Activated CD4-positive, alpha-beta memory T cell treated with anti-CD3 and anti-CD28 coated beads, Interleukin-2, amount 10 ng/mL, durations not matched to agents 7 days and 5 days (primary cell): ENCODE measurements at regions of chr9 and their contacts with region 1.

Region 1: DNA sequence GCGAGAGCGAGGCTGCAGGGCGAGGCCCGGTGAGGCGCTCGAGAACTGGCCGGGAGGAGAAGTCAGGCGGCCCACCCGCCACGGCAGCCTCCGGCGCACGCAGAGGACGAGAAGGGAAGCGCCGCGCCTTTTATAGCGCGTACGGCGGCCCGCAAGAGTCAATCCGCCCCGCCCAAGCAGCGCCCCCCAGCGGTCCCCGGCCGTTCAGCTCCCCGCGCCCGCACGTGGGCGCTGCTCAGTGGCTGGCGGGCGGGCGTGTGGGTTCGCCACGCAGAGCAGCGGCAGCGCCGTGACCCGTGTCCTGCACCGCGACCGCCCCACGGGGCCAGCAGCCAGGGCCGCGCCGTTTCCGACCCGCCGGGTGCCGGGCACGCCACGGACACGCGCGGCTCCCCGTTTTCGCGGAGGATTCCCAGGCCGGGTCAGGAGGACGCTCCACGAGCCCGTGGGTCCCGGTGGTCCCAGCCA is 14.6 kb downstream of the LCN10 start:
- DNase-seq: peak; percentile 92
- H3K4me3 Mint-ChIP-seq: peak overlapping the region; percentile 93
- H3K27ac Mint-ChIP-seq: no peak overlapping the region
- H3K4me1 Mint-ChIP-seq: peaks cover 40% of the 10 kb centered on the region
- H3K27me3 Mint-ChIP-seq: no peaks in the 10 kb centered on the region

Region 2: GRCh38 chr9:136267261-136268111 is 460.6 kb before region 1 on chr9:
- CTCF ChIA-PET with region 1: no interaction called
- POLR2A ChIA-PET with region 1: no interaction called
- DNase-seq: peak; percentile 90
- H3K4me3 Mint-ChIP-seq: peak overlapping the region; percentile 78
- H3K27ac Mint-ChIP-seq: peak overlapping the region; percentile 71
- H3K4me1 Mint-ChIP-seq: peaks cover 9% of the 10 kb centered on the region
- H3K27me3 Mint-ChIP-seq: peaks cover 11% of the 10 kb centered on the region

Region 3: DNA sequence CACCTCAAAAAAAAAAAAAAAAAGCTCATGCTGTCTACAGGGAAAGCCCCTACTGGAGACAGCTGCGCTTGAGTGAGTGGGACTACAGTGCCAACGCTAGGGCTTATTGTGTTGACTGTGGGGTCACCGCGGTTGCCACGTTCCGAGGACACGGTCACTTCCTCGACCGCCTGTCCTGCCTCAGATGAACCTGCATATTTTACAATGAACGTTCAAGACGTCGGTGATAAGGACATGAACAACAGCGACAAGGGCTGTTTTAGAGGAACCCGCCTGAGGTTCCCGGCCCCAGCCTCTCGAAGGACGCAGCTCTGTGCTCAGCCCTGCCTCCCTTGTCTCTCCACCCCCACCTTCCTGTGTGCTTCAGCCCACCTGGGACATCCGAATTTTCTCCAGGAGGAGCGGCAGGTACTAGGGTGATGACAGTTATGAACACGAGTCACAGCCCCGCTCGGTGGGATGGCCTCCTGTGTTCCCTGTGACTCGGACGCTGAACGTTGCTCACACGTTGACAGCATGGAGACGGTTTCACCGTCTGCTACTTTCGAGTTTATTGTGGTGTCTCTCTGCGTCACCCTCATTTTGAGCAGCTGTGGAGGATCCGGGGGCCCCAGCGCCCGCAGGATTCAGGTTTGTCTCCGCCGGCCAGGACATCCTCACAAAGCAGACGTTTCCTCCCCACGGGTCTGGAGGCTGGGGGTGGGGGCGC is 27.0 kb before region 1 on chr9:
- CTCF ChIA-PET with region 1: interaction called, 4 read pairs
- POLR2A ChIA-PET with region 1: interaction called, 16 read pairs
- DNase-seq: peak; percentile 69
- H3K4me3 Mint-ChIP-seq: peak overlapping the region; percentile 72
- H3K27ac Mint-ChIP-seq: peak overlapping the region; percentile 70
- H3K4me1 Mint-ChIP-seq: peaks cover 21% of the 10 kb centered on the region
- H3K27me3 Mint-ChIP-seq: peaks cover 30% of the 10 kb centered on the region

Region 4: GRCh38 chr9:136713548-136714457 is 14.3 kb before region 1 on chr9:
- CTCF ChIA-PET with region 1: interaction called, 6 read pairs
- POLR2A ChIA-PET with region 1: interaction called, 23 read pairs
- DNase-seq: no peak
- H3K4me3 Mint-ChIP-seq: no peak overlapping the region
- H3K27ac Mint-ChIP-seq: no peak overlapping the region
- H3K4me1 Mint-ChIP-seq: peaks cover 2% of the 10 kb centered on the region
- H3K27me3 Mint-ChIP-seq: peaks cover 28% of the 10 kb centered on the region

Region 5: DNA sequence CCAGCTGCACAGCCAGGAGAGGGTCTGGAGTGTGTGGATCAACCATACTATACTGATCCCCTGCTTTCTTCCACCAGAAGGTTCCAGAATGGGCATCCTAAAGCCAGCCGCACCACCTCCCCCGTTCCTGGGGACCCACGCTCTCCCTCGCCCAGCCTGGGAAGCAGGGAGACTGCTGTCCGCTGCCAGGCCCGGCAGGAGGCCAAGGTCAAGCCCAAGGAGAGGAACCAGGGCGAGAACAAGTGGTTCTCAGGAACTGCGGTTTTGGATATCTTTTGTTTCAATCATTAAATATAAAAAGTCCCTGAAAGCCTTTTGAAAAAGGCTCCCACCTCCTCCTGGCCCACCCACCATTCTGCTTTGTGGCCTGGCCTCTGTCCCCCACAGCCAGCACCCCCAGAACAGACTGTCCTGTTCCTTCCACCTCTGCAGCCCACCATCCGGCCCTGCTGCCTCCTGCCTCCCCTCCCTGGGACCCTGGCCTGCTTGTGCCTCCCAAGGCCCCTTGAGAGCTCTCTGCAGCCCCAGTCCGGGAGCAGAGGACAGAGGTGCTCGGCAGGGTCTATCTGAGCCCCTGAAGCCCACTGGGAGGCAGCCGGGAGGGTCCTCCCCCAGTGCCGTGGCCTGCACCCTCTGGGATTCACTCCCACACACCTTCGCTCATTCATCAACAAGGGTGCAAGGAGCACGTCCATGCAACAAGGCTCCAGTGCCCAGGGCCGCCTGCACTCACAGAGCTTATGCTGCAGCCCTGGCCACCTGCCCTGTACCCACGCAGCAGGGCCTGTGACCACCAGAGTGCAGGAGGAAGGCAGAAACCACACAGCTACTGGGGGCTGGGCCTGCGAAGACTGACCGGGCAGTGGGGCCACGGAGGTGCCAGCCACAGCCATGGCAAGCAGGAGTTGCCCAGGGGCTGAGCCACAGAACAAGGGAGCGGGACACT is 20.8 kb after region 1 on chr9:
- CTCF ChIA-PET with region 1: interaction called, 6 read pairs
- POLR2A ChIA-PET with region 1: interaction called, 12 read pairs
- DNase-seq: no peak
- H3K4me3 Mint-ChIP-seq: no peak overlapping the region
- H3K27ac Mint-ChIP-seq: no peak overlapping the region
- H3K4me1 Mint-ChIP-seq: peaks cover 12% of the 10 kb centered on the region
- H3K27me3 Mint-ChIP-seq: peaks cover 15% of the 10 kb centered on the region

Region 6: DNA sequence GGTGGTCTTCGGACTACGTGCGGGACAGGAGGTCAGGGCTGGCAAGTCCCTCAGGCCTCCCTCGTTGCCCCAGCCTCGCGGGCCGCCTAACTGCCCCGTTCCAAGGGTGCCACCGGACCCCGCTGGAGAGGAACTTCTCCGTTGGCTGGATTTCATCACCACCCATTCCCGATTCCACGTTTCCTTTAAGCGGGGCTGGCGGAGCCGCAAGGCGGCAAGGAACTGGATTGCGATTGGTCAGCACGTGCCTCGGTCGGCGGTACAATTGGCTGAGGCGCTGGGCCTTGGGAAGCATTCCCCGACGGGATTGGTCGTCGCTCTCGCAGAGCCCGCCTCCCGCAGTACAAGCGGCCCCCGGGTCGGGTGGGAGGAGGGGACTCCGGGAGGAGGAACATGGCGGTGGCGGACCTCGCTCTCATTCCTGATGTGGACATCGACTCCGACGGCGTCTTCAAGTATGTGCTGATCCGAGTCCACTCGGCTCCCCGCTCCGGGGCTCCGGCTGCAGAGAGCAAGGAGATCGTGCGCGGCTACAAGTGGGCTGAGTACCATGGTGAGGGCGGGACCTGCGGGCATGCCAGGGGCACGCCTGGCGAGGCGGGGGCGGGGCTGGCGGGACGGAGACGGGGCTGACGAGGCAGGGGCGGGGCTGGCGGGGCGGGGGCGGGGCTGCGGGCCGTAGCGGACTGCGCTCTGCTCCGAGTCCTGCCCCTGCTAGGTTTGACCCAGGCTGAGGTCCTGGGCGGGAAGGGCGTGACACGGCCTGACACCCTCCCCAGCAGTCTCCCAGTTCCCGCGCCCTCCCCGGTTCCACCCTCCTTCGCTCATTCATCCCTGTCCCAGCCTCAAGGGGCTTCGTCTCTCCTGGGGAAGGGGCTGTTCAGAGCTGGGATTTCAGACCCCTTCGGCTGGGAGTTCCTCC is 121.2 kb after region 1 on chr9 and contains the start of gene PHPT1:
- CTCF ChIA-PET with region 1: no interaction called
- POLR2A ChIA-PET with region 1: no interaction called
- DNase-seq: peak; percentile 97
- H3K4me3 Mint-ChIP-seq: peak within 1 kb of the TSS; percentile 93
- H3K27ac Mint-ChIP-seq: peak within 1 kb of the TSS; percentile 85
- H3K4me1 Mint-ChIP-seq: peaks cover 21% of the 10 kb centered on the region
- H3K27me3 Mint-ChIP-seq: peaks cover 18% of the 10 kb centered on the region
- total RNA-seq, gene PHPT1: 82.3 to 85.4 TPM